ENCODE measurements at regions of chr3 and their contacts with region 1.

Region 1: DNA sequence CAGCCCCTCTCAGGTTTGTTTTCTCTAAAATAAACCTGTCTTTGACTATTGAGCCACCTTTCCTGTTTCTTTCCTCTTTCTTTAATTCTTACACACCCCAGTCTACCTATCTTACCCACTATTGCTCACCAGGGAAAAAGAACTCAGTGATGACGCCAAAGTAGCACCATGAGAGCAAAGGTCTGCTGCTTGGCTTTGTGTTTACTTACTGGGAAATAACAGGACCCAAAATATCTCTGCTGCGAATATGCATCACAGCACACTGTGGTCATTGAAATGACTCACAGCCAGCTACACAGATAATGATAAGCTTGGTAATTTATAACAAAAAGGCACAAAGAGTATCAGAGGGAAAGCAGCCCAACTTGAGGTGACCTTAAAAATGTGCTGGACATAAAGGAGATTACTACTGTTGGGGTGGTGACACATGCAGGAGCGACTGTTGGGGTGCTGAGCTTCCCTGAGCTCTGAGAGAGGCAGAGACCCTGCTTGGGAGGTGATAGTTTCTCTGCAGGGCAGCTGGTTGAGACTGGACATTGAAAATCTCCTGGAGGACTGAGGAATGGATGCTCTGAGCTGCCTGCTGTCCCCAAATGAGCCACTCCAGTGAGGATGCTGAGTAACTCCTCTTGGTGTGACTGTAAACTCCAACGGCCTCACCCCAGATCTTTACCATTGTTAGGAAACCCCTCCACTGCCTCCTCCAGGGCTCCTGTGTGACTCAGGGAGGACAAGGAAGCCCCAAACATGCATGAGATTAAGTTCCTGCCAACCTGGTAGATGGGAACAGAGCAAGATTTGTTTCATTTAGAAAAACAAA is 14.5 kb downstream of the EFCAB12 start:
- DNase-seq: no peak
- H3K4me3 ChIP-seq: no peak overlapping the region
- H3K27ac ChIP-seq: no peak overlapping the region
- H3K4me1 ChIP-seq: no peaks in the 10 kb centered on the region; a peak in 1 of 7 replicates
- H3K27me3 ChIP-seq: peaks cover 0 to 5% (median 0%) of the 10 kb centered on the region in 4 experiments; a peak in 2 of 7 replicates
- CTCF ChIP-seq: no peak
- EP300 ChIP-seq: no peak
- POLR2A ChIP-seq: no peak
- RAD21 ChIP-seq: no peak

Region 2: DNA sequence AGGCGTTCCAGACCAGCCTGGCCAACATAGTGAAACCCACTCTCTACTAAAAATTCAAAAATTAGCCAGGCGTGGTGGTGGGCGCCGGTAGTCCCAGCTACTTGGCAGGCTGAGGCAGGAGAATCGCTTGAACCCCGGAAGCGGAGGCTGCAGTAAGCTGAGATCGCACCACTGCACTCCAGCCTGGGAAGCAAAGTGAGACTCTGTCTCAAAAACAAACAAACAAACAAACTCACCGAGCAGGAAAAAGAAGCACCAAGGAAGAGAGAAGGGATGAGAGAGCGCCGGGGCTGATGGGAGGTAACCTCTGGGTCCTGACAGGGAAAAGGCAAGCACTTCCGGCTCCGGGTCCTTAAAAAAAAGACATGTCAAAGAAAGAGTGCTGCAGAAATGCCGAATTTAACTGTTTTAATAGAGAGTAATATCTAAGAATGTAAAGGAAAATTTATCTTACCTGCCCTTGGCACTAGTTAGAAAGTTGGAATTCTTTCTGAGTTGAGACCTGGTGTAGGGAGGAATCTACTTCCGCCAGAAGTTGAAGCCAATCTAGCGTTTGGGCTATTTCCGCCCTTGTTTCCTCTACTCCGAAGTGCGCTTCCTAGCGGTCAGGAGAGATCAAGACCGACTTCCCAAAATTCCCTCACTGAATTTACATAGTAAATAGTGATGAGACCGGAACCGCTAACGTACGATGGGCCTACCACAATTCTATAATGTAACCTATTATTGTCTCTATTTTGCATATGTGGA is 14.6 kb before region 1 on chr3:
- CTCF ChIA-PET with region 1: interaction called, 16 read pairs
- POLR2A ChIA-PET with region 1: interaction called, 4 read pairs
- DNase-seq: peak; percentile 63 to 72
- H3K4me3 ChIP-seq: peak overlapping the region; percentile 61 to 89 (median 83)
- H3K27ac ChIP-seq: peak overlapping the region; percentile 72
- H3K4me1 ChIP-seq: peaks cover 0 to 4% (median 0%) of the 10 kb centered on the region in 4 experiments; a peak in 3 of 7 replicates
- H3K27me3 ChIP-seq: no peaks in the 10 kb centered on the region; a peak in 1 of 7 replicates
- CTCF ChIP-seq: peak; percentile 58 to 85 (median 65)
- EP300 ChIP-seq: no peak
- POLR2A ChIP-seq: no peak
- RAD21 ChIP-seq: peak in 1 of 2 experiments; percentile 37; a peak in 2 of 4 replicates

Measured in H1 (cell line).